ENCODE measurements at regions of chr5 and their contacts with region 1.

Region 1: GRCh38 chr5:34474573-34475021 is 181.5 kb upstream of the RAI14 start:
- DNase-seq: no peak
- H3K4me3 Mint-ChIP-seq: no peak overlapping the region
- H3K27ac Mint-ChIP-seq: no peak overlapping the region
- H3K4me1 Mint-ChIP-seq: no peaks in the 10 kb centered on the region
- H3K27me3 Mint-ChIP-seq: peaks cover 13% of the 10 kb centered on the region

Region 2: GRCh38 chr5:34447424-34447823 is 27.2 kb before region 1 on chr5:
- CTCF ChIA-PET with region 1: no interaction called
- POLR2A ChIA-PET with region 1: no interaction called
- intact Hi-C with region 1: no loop called
- DNase-seq: no peak
- H3K4me3 Mint-ChIP-seq: no peak overlapping the region
- H3K27ac Mint-ChIP-seq: no peak overlapping the region
- H3K4me1 Mint-ChIP-seq: no peaks in the 10 kb centered on the region
- H3K27me3 Mint-ChIP-seq: peaks cover 11% of the 10 kb centered on the region

Region 3: DNA sequence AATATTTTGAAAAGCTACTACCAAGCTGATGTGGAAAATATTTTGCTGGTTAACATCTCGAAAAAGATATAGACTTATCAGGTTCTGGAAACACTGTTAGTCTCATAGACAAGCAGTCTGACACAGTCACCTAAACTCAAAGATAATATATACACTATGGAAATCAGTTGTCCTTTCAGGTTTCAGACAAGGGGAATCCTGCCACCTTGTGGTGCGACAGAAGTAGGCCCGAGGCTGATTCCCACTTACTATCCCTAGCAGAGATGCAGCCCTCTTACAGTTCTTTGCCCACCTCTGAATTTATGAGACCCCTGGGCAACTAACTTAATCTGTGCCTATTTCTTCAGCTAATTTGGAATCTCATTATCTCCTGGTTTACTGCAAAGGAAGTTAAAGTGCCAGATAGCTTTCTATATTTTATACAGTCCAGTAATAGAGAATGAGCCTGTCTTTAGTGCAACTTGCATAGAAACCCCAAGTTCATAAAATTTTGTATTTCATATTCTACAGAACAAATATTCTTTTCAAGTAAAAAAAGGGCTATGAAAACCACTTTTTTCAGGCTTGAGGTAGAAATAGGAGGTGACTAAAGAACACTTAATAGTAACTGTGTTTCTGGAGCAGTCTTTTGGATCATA is 423.8 kb after region 1 on chr5:
- CTCF ChIA-PET with region 1: interaction called, 23 read pairs
- POLR2A ChIA-PET with region 1: no interaction called
- intact Hi-C with region 1: loop called (anchors 1 kb)
- DNase-seq: peak; percentile 67
- H3K4me3 Mint-ChIP-seq: no peak overlapping the region
- H3K27ac Mint-ChIP-seq: no peak overlapping the region
- H3K4me1 Mint-ChIP-seq: no peaks in the 10 kb centered on the region
- H3K27me3 Mint-ChIP-seq: no peaks in the 10 kb centered on the region

Region 4: DNA sequence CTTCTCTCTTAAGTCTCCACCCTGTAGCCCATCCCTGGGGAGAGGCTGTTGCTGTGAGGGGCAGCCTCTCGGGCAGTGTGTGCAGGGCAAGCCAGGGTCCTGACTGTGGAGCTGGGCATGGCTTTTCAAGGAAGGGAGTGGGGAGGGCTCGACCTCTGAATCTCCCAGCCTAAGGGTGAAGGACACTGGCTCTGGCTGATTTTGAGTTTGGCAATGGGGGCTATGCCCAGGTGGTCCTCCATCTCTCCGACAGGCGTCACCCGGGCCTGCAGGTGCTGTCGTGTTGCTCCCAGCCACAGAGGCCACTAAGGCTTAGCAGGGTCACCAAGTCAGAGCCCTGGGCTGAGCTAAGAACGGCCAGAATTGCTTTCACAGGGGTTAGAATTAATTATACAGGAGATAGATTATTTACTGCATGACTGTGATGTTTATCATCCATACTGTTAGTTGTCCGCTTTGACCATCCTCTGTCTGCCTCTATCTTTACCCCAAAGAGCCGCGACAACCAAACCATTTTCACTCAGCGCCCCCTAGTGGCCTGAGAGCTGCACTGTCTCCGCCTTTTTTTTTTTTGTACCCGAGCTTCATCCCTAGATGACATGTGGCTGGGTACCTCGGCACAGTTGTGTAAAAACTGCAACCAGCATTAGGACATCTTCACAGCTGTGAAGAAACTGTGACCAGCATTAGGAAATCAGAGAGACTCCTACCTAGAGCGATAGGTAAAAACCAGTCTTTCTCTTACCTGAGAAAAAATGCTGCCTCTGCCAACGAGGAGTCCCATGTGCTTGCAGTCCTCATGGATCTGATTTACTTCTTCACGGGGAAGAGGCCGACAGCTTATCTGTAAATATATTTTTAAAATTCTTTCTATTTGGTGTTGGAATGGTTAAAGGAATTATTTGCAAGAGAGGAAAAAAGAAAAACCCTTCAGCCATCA is 528.7 kb after region 1 on chr5:
- CTCF ChIA-PET with region 1: interaction called, 13 read pairs
- POLR2A ChIA-PET with region 1: no interaction called
- intact Hi-C with region 1: loop called (anchors 2 kb)
- DNase-seq: peak; percentile 69
- H3K4me3 Mint-ChIP-seq: no peak overlapping the region
- H3K27ac Mint-ChIP-seq: no peak overlapping the region
- H3K4me1 Mint-ChIP-seq: no peaks in the 10 kb centered on the region
- H3K27me3 Mint-ChIP-seq: peaks cover 29% of the 10 kb centered on the region